H1 (cell line): ENCODE measurements at regions of chr11 and their contacts with region 1.

Region 1: DNA sequence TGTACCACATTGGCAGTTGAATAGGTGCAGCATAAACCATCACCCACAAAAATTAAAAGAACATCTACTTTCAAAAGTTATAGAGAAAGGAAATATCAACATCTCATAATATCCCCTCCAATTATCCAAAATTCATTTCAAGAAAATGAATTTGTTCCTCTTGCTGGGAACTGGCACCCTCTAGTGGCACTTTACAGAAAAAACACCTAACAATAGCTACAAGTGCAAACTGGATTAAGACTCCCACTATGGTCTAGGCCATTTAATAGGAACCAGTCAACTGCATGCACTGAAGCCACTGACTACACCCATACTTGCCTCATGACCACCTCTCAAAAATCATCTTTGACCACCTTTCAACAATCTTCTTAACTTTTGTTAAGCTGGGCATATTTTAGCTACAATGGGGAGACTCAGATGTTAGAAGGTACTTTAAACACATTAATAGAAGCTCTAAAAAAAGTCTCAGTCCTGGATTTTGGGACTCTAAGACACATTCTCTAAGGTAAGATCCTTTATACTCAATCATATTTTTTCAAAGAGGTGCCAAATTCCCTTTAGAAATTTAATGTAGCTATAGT is 17.3 kb downstream of the TRAF6 start:
- DNase-seq: no peak
- H3K4me3 ChIP-seq: no peak overlapping the region
- H3K27ac ChIP-seq: no peak overlapping the region
- H3K4me1 ChIP-seq: no peaks in the 10 kb centered on the region
- H3K27me3 ChIP-seq: no peaks in the 10 kb centered on the region
- CTCF ChIP-seq: peak in 2 of 3 experiments; percentile 49 to 74; a peak in 2 of 4 replicates
- EP300 ChIP-seq: no peak
- POLR2A ChIP-seq: no peak
- RAD21 ChIP-seq: peak; percentile 75 to 76

Region 2: DNA sequence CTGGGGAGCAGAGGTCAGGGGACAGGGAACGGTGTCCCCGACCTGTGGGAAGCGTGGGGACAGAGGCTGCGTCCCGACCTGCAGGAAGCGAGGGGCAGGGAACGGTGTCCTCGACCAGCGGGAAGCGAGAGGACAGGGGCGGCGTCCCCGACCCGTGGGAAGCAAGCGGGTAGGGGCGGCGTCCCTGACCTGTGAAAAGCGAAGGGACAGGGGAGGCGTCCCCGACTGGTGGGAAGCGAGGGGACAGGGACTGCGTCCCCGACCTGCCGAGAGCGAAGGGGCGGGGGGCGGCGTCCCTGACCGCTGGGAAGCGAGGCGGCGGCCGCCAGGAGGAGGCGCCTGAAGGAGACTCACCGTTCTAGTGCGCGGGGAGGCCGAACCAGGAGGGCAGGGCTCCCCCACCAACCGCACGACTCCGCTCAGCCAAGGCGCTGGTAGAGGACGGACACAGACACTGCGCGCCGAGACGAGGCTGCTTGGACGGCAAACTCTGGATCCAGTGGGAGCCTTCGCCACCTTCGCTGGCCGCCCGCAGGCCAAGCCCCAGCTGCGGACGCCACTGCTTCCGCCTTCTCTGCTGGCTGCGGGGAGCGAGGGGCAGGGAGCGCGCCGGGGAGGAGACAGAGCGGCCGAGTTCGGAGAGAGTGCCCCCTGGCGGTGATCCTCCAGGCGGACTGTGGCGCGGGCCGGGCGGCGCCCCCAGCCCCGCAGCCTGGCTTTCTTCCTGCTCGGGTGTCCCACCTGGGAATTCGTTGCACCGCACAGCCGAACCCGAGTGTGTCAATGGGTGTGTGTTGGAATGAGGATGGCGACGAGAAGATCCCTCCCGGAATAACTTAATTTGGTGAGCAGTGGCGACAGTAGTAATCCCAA is 17.1 kb after region 1 on chr11 and contains the start of gene TRAF6:
- CTCF ChIA-PET with region 1: interaction called, 12 read pairs
- POLR2A ChIA-PET with region 1: interaction called, 7 read pairs
- DNase-seq: peak; percentile 43 to 98
- H3K4me3 ChIP-seq: peak within 1 kb of the TSS; percentile 95 to 96 (median 96)
- H3K27ac ChIP-seq: peak within 1 kb of the TSS; percentile 87; the same call in 1 of the 2 replicates
- H3K4me1 ChIP-seq: no peaks in the 10 kb centered on the region; a peak in 2 of 7 replicates
- H3K27me3 ChIP-seq: no peaks in the 10 kb centered on the region; a peak in 2 of 7 replicates
- CTCF ChIP-seq: peak; percentile 75 to 87 (median 85)
- EP300 ChIP-seq: no peak
- POLR2A ChIP-seq: peak; percentile 93 to 95
- RAD21 ChIP-seq: peak; percentile 29 to 32; a peak in 3 of 4 replicates
- total RNA-seq, gene TRAF6: 8.8 and 9.4 TPM in 2 replicates